ENCODE measurements at regions of chr3 and their contacts with region 1.

Region 1: DNA sequence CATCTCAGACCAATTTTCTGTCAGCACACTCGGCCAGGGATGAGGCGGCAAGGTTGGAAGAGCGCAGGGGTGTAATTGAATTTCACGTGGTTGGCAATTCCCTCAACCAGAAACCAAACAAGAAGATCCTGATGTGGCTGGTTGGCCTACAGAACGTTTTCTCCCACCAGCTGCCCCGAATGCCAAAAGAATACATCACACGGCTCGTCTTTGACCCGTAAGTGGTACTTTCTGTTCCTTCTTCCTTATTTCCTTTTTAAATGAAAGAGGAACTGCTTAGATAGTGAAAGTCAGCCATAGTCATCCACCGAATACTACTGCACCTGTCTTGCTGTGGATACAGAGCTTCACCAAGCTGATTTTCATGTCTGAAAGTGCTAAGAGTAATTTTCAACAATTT is 60.1 kb downstream of the SGO1 start:
- H3K4me3 Mint-ChIP-seq: no peak overlapping the region
- H3K27ac Mint-ChIP-seq: peak overlapping the region; percentile 18
- H3K4me1 Mint-ChIP-seq: peaks cover 18% of the 10 kb centered on the region
- H3K27me3 Mint-ChIP-seq: peaks cover 1% of the 10 kb centered on the region

Region 2: GRCh38 chr3:20185701-20186598 is 60.1 kb after region 1 on chr3 and contains the start of gene SGO1:
- intact Hi-C with region 1: loop called (anchors 1 kb)
- H3K4me3 Mint-ChIP-seq: no peak within 1 kb of the TSS
- H3K27ac Mint-ChIP-seq: no peak within 1 kb of the TSS
- H3K4me1 Mint-ChIP-seq: no peaks in the 10 kb centered on the region
- H3K27me3 Mint-ChIP-seq: no peaks in the 10 kb centered on the region

Measured in dendritic cell treated with granulocyte-macrophage colony-stimulating factor and Interleukin-4, amounts not matched to agents 40 ng/mL and 50 ng/mL, for 4 days (primary cell).